Right ventricle myocardium superior (tissue), 1 donor: ENCODE measurements at regions of chr12 and their contacts with region 1.

Region 1: DNA sequence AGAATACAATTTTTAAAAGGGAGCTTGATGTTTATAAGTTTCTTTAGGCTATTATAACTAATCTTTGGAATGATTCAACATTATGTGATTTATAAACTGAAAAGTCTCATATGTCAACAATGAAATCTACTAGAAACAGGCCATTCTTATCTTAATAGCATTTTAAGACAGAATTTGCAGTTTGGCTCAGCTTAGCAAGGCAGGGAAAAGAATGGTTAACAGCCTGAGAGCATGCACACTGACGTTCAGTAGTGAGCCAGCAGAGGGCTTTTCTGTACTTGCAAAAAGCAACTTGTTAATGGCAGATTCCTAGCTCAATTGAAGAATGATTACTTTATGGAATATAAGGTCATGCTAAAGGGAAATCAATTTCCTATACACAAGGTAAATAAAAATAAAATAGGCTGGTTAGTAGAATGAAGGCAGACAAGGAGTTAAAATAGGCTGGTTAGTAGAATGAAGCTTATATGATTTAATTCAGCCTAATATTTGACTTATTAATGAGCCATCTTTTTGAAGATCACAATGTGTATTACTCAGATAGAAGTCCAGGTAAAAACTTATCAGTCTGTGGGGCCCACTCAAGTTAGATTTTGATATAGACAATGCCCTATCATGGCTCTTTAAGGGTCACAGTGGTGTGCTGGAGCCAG is 95.9 kb downstream of the OTOGL start:
- DNase-seq: no peak
- ATAC-seq: peak; percentile 82

Region 2: GRCh38 chr12:80269803-80270552 is 74.8 kb after region 1 on chr12:
- intact Hi-C with region 1: loop called (anchors 5 kb)
- DNase-seq: no peak
- ATAC-seq: peak; percentile 71

Region 3: GRCh38 chr12:80313209-80313608 is 118.0 kb after region 1 on chr12:
- intact Hi-C with region 1: no loop called
- DNase-seq: no peak
- ATAC-seq: no peak